ENCODE measurements at regions of chr3 and their contacts with region 1.

Region 1: GRCh38 chr3:126679318-126679751 is 24.4 kb upstream of the TXNRD3 start:
- DNase-seq: peak; percentile 86
- ATAC-seq: peak; percentile 90
- H3K4me3 Mint-ChIP-seq: no peak overlapping the region
- H3K27ac Mint-ChIP-seq: no peak overlapping the region
- H3K4me1 Mint-ChIP-seq: peaks cover 3% of the 10 kb centered on the region
- H3K27me3 Mint-ChIP-seq: peaks cover 5% of the 10 kb centered on the region
- CTCF ChIP-seq: peak; percentile 97

Region 2: GRCh38 chr3:126654571-126655383 is 24.6 kb before region 1 on chr3 and contains the start of gene TXNRD3:
- CTCF ChIA-PET with region 1: interaction called, 12 read pairs
- POLR2A ChIA-PET with region 1: no interaction called
- intact Hi-C with region 1: no loop called
- DNase-seq: peak; percentile 82
- ATAC-seq: peak; percentile 92
- H3K4me3 Mint-ChIP-seq: peak within 1 kb of the TSS; percentile 78
- H3K27ac Mint-ChIP-seq: peak within 1 kb of the TSS; percentile 74
- H3K4me1 Mint-ChIP-seq: peaks cover 2% of the 10 kb centered on the region
- H3K27me3 Mint-ChIP-seq: peaks cover 2% of the 10 kb centered on the region
- CTCF ChIP-seq: no peak
- total RNA-seq, gene TXNRD3: 4.5 to 5.0 TPM

Region 3: GRCh38 chr3:126711128-126711760 is 31.9 kb after region 1 on chr3:
- CTCF ChIA-PET with region 1: interaction called, 12 read pairs
- POLR2A ChIA-PET with region 1: no interaction called
- intact Hi-C with region 1: no loop called
- DNase-seq: no peak
- ATAC-seq: no peak
- H3K4me3 Mint-ChIP-seq: no peak overlapping the region
- H3K27ac Mint-ChIP-seq: no peak overlapping the region
- H3K4me1 Mint-ChIP-seq: peaks cover 2% of the 10 kb centered on the region
- H3K27me3 Mint-ChIP-seq: no peaks in the 10 kb centered on the region
- CTCF ChIP-seq: no peak

Region 4: GRCh38 chr3:126752303-126752842 is 73.0 kb after region 1 on chr3:
- CTCF ChIA-PET with region 1: no interaction called
- POLR2A ChIA-PET with region 1: no interaction called
- intact Hi-C with region 1: no loop called
- DNase-seq: peak; percentile 74
- ATAC-seq: peak; percentile 87
- H3K4me3 Mint-ChIP-seq: no peak overlapping the region
- H3K27ac Mint-ChIP-seq: no peak overlapping the region
- H3K4me1 Mint-ChIP-seq: peaks cover 6% of the 10 kb centered on the region
- H3K27me3 Mint-ChIP-seq: no peaks in the 10 kb centered on the region
- CTCF ChIP-seq: peak; percentile 65

Region 5: GRCh38 chr3:126982471-126983175 is 303.3 kb after region 1 on chr3 and contains the start of gene PLXNA1:
- CTCF ChIA-PET with region 1: interaction called, 5 read pairs
- POLR2A ChIA-PET with region 1: no interaction called
- intact Hi-C with region 1: loop called (anchors 5 kb)
- DNase-seq: peak; percentile 83
- ATAC-seq: peak; percentile 81
- H3K4me3 Mint-ChIP-seq: peak within 1 kb of the TSS; percentile 76
- H3K27ac Mint-ChIP-seq: peak within 1 kb of the TSS; percentile 86
- H3K4me1 Mint-ChIP-seq: peaks cover 20% of the 10 kb centered on the region
- H3K27me3 Mint-ChIP-seq: peaks cover 15% of the 10 kb centered on the region
- CTCF ChIP-seq: peak; percentile 96
- total RNA-seq, gene PLXNA1: 5.1 to 6.6 TPM

Region 6: GRCh38 chr3:127455541-127456450 is 776.5 kb after region 1 on chr3:
- CTCF ChIA-PET with region 1: interaction called, 6 read pairs
- POLR2A ChIA-PET with region 1: no interaction called
- intact Hi-C with region 1: loop called (anchors 10 kb)
- DNase-seq: peak; percentile 76
- ATAC-seq: peak; percentile 96
- H3K4me3 Mint-ChIP-seq: no peak overlapping the region
- H3K27ac Mint-ChIP-seq: no peak overlapping the region
- H3K4me1 Mint-ChIP-seq: peaks cover 10% of the 10 kb centered on the region
- H3K27me3 Mint-ChIP-seq: peaks cover 46% of the 10 kb centered on the region
- CTCF ChIP-seq: peak; percentile 96

Region 7: DNA sequence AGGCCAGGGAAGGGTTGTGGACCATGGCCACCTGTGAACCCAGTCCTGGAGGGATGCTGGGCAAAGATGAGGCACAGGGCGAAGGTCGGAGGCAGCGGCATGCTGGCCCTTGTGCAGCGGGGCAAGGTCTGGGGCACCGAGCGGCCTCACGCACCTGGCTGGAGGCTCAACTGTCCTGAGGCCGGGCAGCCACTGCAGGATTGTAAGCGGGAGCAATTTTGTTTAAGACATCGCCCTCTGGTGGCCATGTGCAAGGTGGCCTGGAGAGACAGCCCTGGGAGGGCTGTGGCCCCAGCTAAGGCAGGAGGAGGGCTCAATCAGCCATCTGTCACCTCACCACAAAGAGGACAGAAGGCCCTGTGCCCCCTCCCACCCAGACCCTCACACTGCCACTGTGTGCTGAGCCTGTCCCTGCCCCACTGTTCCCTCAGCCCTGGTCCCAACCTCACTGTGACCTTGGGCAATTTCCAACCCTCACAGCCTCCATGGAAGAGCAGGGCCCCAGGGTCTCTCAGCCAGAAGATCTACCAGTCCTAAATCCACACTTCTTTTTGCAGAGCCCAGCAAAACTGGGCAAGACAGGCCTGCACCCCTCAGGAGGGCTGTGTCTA is 865.0 kb after region 1 on chr3:
- CTCF ChIA-PET with region 1: interaction called, 21 read pairs
- POLR2A ChIA-PET with region 1: no interaction called
- intact Hi-C with region 1: loop called (anchors 5 kb)
- DNase-seq: peak; percentile 83
- ATAC-seq: peak; percentile 45
- H3K4me3 Mint-ChIP-seq: no peak overlapping the region
- H3K27ac Mint-ChIP-seq: no peak overlapping the region
- H3K4me1 Mint-ChIP-seq: peaks cover 5% of the 10 kb centered on the region
- H3K27me3 Mint-ChIP-seq: no peaks in the 10 kb centered on the region
- CTCF ChIP-seq: peak; percentile 81

Measured in activated CD8-positive, alpha-beta T cell treated with anti-CD3 and anti-CD28 coated beads for 36 hours (primary cell).